Activated CD4-positive, alpha-beta memory T cell treated with anti-CD3 and anti-CD28 coated beads, Interleukin-2, amount 10 ng/mL, durations not matched to agents 7 days and 5 days (primary cell): ENCODE measurements at regions of chr4 and their contacts with region 1.

Region 1: GRCh38 chr4:88033309-88033708 is 25.9 kb downstream of the PKD2 start:
- DNase-seq: peak; percentile 33
- H3K4me3 Mint-ChIP-seq: no peak overlapping the region
- H3K27ac Mint-ChIP-seq: no peak overlapping the region
- H3K4me1 Mint-ChIP-seq: peaks cover 4% of the 10 kb centered on the region
- H3K27me3 Mint-ChIP-seq: no peaks in the 10 kb centered on the region

Region 2: GRCh38 chr4:88021824-88022223 is 11.5 kb before region 1 on chr4:
- CTCF ChIA-PET with region 1: interaction called, 19 read pairs
- POLR2A ChIA-PET with region 1: no interaction called
- DNase-seq: no peak
- H3K4me3 Mint-ChIP-seq: no peak overlapping the region
- H3K27ac Mint-ChIP-seq: no peak overlapping the region
- H3K4me1 Mint-ChIP-seq: peaks cover 2% of the 10 kb centered on the region
- H3K27me3 Mint-ChIP-seq: no peaks in the 10 kb centered on the region